ENCODE measurements at regions of chr11 and their contacts with region 1.

Region 1: GRCh38 chr11:10534316-10534715 is 6.7 kb downstream of the RNF141 start:
- DNase-seq: no peak
- ATAC-seq: no peak
- H3K4me3 ChIP-seq: no peak overlapping the region
- H3K27ac ChIP-seq: no peak overlapping the region
- H3K4me1 ChIP-seq: peaks cover 7% of the 10 kb centered on the region; the same call in 1 of the 2 replicates
- H3K27me3 ChIP-seq: no peaks in the 10 kb centered on the region
- CTCF ChIP-seq: no peak

Region 2: GRCh38 chr11:10387206-10388083 is 146.9 kb before region 1 on chr11:
- CTCF ChIA-PET with region 1: no interaction called
- POLR2A ChIA-PET with region 1: no interaction called
- in situ Hi-C with region 1: no loop called
- intact Hi-C with region 1: no loop called
- DNase-seq: no peak
- ATAC-seq: peak; percentile 52; the same call in 1 of the 2 replicates
- H3K4me3 ChIP-seq: no peak overlapping the region
- H3K27ac ChIP-seq: no peak overlapping the region
- H3K4me1 ChIP-seq: no peaks in the 10 kb centered on the region
- H3K27me3 ChIP-seq: no peaks in the 10 kb centered on the region
- CTCF ChIP-seq: no peak

Region 3: DNA sequence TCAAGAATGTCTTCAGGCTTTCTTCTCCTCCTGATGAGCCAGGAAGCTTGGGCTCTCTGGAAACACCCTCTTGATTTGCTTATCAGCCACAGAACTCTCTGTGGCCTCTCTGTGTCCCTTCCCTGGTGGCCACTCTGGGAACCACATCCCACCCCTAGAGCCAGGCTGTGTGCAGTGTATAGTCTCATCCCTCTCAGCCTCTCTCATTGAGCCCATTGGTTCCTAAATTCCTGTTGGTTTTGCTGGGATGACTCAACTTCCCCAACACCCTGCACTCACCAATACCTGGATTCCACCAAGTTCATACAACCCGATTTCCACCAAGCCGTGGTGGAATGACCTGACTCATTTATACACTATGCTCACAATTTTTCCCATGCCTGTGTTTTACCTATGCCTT is 154.1 kb after region 1 on chr11:
- CTCF ChIA-PET with region 1: interaction called, 10 read pairs
- POLR2A ChIA-PET with region 1: no interaction called
- in situ Hi-C with region 1: no loop called
- intact Hi-C with region 1: no loop called
- DNase-seq: no peak
- ATAC-seq: no peak
- H3K4me3 ChIP-seq: no peak overlapping the region
- H3K27ac ChIP-seq: no peak overlapping the region
- H3K4me1 ChIP-seq: no peaks in the 10 kb centered on the region
- H3K27me3 ChIP-seq: peaks cover 5% of the 10 kb centered on the region; the same call in 1 of the 2 replicates
- CTCF ChIP-seq: no peak